GM18951 (cell line): ENCODE measurements at regions of chr1 and their contacts with region 1.

Region 1: DNA sequence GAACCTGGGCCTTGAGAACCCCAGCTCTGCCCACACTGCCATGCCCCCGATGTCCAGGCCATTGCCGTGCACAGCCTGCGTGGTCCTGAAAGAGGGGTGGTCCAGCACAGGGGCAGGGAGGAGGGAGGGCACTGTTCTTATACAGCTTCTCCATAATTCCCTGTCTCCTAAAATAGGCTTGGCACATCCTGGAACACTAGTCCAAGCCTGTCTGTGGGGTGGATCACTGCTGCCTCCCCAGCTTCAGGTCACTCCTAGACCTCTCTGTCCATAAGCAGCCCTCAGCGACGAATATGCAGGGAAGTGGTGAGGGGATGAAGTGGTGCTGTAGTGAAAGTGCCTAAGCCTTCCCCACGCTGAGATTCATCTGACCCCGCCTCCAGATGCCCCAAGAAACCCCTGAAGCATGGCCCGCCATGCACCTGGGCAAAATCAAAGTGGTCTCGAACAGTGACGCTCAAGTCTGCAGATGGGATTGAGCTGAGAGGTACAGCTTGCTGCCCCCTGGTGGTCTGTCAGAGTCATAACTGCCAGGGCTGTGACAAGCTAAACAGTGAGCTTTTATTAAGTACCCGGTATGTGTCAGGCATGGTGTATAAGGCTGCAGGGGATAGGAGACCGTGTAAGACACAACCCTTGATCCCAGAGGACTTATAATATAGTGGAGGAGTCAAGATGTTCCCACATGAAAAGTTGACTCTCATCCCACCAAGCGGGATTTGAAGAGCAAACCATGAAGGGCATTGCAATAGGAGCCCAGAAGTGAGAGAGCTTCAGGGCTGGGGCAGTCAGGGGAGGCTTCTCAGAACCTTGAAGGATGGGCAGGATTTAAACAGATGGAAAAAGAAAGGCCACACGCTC is 66.6 kb downstream of the FAM163A start:
- POLR2A ChIP-seq: no peak

Region 2: DNA sequence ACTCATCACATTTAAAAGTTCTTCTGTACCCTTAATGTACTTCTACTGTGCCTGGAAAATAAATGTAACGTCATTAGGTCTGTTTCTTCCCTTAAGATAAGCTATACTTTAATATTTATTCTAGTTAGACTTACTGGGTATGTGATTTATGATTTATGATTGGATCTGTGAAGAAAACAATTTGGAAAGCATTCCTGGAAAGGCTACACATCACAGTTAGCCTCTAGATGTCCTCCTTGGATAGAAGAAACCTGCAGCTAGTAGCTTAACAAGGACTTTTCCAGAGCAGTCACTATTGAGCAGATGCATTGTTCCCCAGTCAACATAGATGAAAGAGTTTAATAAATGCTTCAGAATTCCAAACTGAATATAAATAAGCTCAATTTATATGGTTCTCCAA is 558.1 kb before region 1 on chr1:
- in situ Hi-C with region 1: loop called (anchors 25 kb)
- POLR2A ChIP-seq: no peak

Region 3: DNA sequence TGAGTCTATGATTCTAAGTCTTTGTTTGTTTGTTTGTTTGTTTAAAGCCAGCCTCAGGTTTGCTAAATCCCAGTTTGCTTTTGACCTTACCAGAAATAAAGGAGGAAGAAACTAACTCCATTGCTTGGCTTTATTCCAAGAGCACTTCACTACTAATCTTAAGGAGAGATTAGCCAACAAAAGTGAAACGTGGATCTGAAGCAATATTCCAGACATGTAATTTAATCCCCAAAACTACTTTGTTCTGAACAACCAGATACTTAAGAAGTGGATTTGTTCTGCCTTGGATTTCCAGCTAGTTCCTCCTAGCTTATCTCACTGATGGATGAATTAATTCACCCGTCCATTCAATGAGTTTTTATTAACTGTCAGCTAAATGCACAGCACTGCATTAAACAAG is 129.0 kb after region 1 on chr1:
- in situ Hi-C with region 1: no loop called
- POLR2A ChIP-seq: no peak